Common myeloid progenitor, CD34-positive (primary cell): ENCODE measurements at regions of chr12 and their contacts with region 1.

Region 1: GRCh38 chr12:6367065-6367968 is 8.0 kb downstream of the SCNN1A start:
- DNase-seq: peak; percentile 84 to 93 (median 92)
- H3K4me3 ChIP-seq: no peak overlapping the region
- H3K27ac ChIP-seq: no peak overlapping the region
- H3K4me1 ChIP-seq: peaks cover 8 to 61% (median 40%) of the 10 kb centered on the region in 4 experiments
- H3K27me3 ChIP-seq: no peaks in the 10 kb centered on the region

Region 2: GRCh38 chr12:6335451-6336078 is 31.8 kb before region 1 on chr12:
- CTCF ChIA-PET with region 1: interaction called, 84 read pairs
- POLR2A ChIA-PET with region 1: interaction called, 12 read pairs
- DNase-seq: peak; percentile 87 to 96 (median 94)
- H3K4me3 ChIP-seq: peak overlapping the region in 6 of 7 experiments; percentile 65 to 99 (median 98)
- H3K27ac ChIP-seq: peak overlapping the region; percentile 74 to 96
- H3K4me1 ChIP-seq: peaks cover 30 to 81% (median 78%) of the 10 kb centered on the region in 4 experiments
- H3K27me3 ChIP-seq: no peaks in the 10 kb centered on the region

Region 3: GRCh38 chr12:6383572-6384498 is 16.5 kb after region 1 on chr12 and contains the start of gene LTBR:
- CTCF ChIA-PET with region 1: interaction called, 23 read pairs
- POLR2A ChIA-PET with region 1: no interaction called
- DNase-seq: peak; percentile 33 to 57 (median 55)
- H3K4me3 ChIP-seq: peak within 1 kb of the TSS; percentile 47 to 76 (median 70)
- H3K27ac ChIP-seq: peak within 1 kb of the TSS; percentile 68 to 83
- H3K4me1 ChIP-seq: peaks cover 0 to 41% (median 27%) of the 10 kb centered on the region in 4 experiments
- H3K27me3 ChIP-seq: no peaks in the 10 kb centered on the region

Region 4: GRCh38 chr12:6394398-6394797 is 27.1 kb after region 1 on chr12:
- CTCF ChIA-PET with region 1: no interaction called
- POLR2A ChIA-PET with region 1: no interaction called
- DNase-seq: no peak
- H3K4me3 ChIP-seq: no peak overlapping the region
- H3K27ac ChIP-seq: no peak overlapping the region
- H3K4me1 ChIP-seq: peaks cover 0 to 4% (median 2%) of the 10 kb centered on the region in 4 experiments
- H3K27me3 ChIP-seq: no peaks in the 10 kb centered on the region